CD4-positive, alpha-beta T cell (primary cell): ENCODE measurements at regions of chr3 and their contacts with region 1.

Region 1: GRCh38 chr3:66938338-66938963 is 59.7 kb upstream of the KBTBD8 start:
- DNase-seq: peak in 10 of 14 experiments; percentile 0 to 65 (median 4)
- ATAC-seq: no peak
- H3K4me3 ChIP-seq: no peak overlapping the region
- H3K4me3 Mint-ChIP-seq: no peak overlapping the region
- H3K27ac ChIP-seq: no peak overlapping the region
- H3K27ac Mint-ChIP-seq: no peak overlapping the region
- H3K4me1 ChIP-seq: no peaks in the 10 kb centered on the region
- H3K4me1 Mint-ChIP-seq: no peaks in the 10 kb centered on the region
- H3K27me3 ChIP-seq: no peaks in the 10 kb centered on the region
- H3K27me3 Mint-ChIP-seq: peaks cover 49% of the 10 kb centered on the region
- CTCF ChIP-seq: peak; percentile 72

Region 2: GRCh38 chr3:68893600-68894239 is 1955.3 kb after region 1 on chr3:
- CTCF ChIA-PET with region 1: interaction called, 4 read pairs
- POLR2A ChIA-PET with region 1: interaction called, 3 read pairs
- intact Hi-C with region 1: loop called (anchors 1 to 5 kb)
- DNase-seq: peak in 4 of 14 experiments; percentile 4 to 60 (median 52)
- ATAC-seq: no peak
- H3K4me3 ChIP-seq: no peak overlapping the region
- H3K4me3 Mint-ChIP-seq: no peak overlapping the region
- H3K27ac ChIP-seq: no peak overlapping the region
- H3K27ac Mint-ChIP-seq: no peak overlapping the region
- H3K4me1 ChIP-seq: no peaks in the 10 kb centered on the region
- H3K4me1 Mint-ChIP-seq: no peaks in the 10 kb centered on the region
- H3K27me3 ChIP-seq: peaks cover 0 to 4% of the 10 kb centered on the region in 2 experiments
- H3K27me3 Mint-ChIP-seq: peaks cover 14% of the 10 kb centered on the region
- CTCF ChIP-seq: peak; percentile 77